ENCODE measurements at regions of chr20 and their contacts with region 1.

Region 1: DNA sequence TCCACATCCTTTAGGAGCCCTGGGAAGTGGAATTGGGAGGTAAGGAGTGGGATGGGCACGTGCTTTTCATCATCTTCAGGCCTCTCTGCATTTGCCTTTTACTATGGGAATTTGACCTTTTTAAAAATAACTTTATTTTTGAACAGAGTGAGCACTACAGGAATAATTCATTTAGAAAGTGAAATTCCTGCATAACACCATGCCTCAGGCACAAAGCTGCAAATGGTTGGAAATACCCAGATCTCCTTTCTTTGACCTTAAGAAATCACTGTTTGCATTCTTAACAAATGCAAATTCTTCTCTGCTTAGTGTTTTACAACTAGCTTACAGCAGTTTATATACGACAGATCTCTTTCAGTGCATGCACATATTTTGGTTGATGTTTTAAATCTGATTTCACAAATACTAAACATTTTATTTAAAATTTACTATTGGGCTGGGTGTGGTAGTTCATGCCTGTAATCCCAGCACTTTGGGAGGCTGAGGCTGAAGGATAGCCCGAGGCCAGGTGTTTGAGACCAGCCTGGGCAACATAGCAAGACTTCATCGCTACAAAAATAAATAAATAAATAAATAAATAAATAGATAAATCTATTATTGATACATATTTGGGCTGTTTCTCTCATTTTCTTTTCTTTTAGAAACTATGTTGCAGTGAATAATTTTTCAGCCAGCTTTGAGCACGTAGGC is 24.5 kb downstream of the CST8 start:
- DNase-seq: no peak
- H3K4me3 ChIP-seq: no peak overlapping the region
- CTCF ChIP-seq: no peak
- POLR2A ChIP-seq: no peak

Region 2: DNA sequence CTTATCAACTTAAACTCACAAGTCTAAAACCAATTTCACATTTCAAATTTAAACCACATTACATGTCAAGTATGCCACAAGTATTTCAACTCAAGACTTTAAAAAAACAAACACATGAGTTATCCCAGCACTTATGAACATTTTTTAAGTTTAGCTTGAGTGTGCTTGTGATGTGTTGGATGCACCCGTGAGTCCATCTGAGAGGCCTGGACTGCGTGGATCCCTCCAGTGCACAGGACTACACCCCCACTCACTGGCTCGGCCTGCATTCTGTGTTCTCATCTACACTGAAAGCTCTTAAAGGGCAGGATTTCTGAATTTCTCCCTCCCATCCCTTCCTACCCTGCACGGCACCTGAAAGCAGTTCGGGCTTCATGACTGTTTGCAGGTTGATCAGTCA is 300.5 kb before region 1 on chr20:
- intact Hi-C with region 1: loop called (anchors 5 kb)
- DNase-seq: peak in 1 of 2 donors; percentile 58
- H3K4me3 ChIP-seq: no peak overlapping the region
- CTCF ChIP-seq: no peak
- POLR2A ChIP-seq: no peak

Measured in lower leg skin (tissue), 4 donors.